Transverse colon (tissue), 4 donors: ENCODE measurements at regions of chr6 and their contacts with region 1.

Region 1: GRCh38 chr6:42745707-42746462 is at the start of gene TBCC:
- DNase-seq: peak; percentile 96
- H3K4me3 ChIP-seq: peak within 1 kb of the TSS; percentile 86 to 98 (median 91)
- H3K27ac ChIP-seq: peak within 1 kb of the TSS; percentile 95 to 99 (median 98)
- H3K4me1 ChIP-seq: peaks cover 16 to 27% (median 24%) of the 10 kb centered on the region in 4 donors
- H3K27me3 ChIP-seq: no peaks in the 10 kb centered on the region
- CTCF ChIP-seq: no peak
- EP300 ChIP-seq: no peak
- POLR2A ChIP-seq: peak; percentile 99
- total RNA-seq, gene TBCC: 5.2 to 43.3 (median 27.3) TPM

Region 2: DNA sequence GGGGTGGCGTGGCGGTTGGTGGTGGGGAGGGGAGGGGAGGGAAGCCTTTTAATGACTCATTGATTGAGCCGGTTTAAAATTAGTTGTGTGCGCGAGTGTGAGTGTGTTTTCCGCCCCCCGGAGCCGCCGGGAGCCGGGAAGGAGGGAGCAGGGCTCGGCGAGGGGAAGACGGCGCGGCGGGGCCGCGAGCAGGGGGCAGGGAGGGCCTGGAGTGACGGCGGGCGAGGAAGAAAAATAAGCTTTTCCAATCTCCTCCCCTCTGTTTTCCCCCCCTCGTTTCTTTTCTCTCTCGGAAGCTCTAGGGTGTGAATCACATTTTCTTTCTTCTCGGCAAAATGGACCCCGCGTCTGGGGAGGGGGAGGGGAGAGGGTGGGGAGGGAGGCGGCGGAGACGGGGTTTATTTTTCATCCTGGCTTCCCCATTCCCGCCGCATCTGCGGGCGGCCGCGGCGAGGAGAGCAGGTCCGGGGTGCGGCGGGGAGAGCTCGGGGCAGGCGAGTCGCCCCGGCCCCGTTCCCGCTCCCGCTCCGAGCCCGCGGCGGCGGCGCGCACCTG is 36.8 kb after region 1 on chr6:
- in situ Hi-C with region 1: no loop called
- intact Hi-C with region 1: loop called (anchors 2 kb)
- DNase-seq: peak; percentile 82
- H3K4me3 ChIP-seq: peak overlapping the region; percentile 69 to 98 (median 86)
- H3K27ac ChIP-seq: peak overlapping the region; percentile 98 to 100 (median 100)
- H3K4me1 ChIP-seq: peaks cover 12 to 66% (median 45%) of the 10 kb centered on the region in 4 donors
- H3K27me3 ChIP-seq: no peaks in the 10 kb centered on the region
- CTCF ChIP-seq: no peak
- EP300 ChIP-seq: no peak
- POLR2A ChIP-seq: peak; percentile 86

Region 3: DNA sequence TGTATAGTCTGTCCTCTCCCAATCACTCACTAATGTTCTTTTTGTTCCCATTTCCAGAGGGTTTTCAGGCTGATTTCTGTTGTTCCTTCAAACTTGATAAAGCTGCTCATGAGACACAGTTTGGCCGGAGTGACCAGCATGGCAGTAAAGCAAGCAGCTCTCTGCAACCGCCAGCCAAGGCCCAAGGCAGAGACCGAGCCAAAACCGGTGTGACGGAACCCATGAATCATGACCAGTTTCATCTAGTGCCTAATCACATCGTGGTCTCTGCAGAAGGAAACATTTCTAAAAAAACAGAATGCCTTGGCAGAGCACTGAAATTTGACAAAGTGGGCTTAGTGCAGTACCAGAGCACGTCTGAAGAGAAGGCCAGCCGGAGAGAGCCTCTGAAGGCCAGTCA is 118.7 kb after region 1 on chr6:
- in situ Hi-C with region 1: loop called in 1 of 4 experiments (anchors 25 kb)
- intact Hi-C with region 1: no loop called
- DNase-seq: no peak
- H3K4me3 ChIP-seq: no peak overlapping the region
- H3K27ac ChIP-seq: no peak overlapping the region
- H3K4me1 ChIP-seq: no peaks in the 10 kb centered on the region
- H3K27me3 ChIP-seq: no peaks in the 10 kb centered on the region
- CTCF ChIP-seq: no peak
- EP300 ChIP-seq: no peak
- POLR2A ChIP-seq: no peak

Region 4: GRCh38 chr6:42879372-42880239 is 133.7 kb after region 1 on chr6 and contains the start of gene RPL7L1:
- in situ Hi-C with region 1: loop called in 2 of 4 experiments (anchors 25 kb)
- intact Hi-C with region 1: loop called (anchors 5 kb)
- DNase-seq: peak; percentile 84
- H3K4me3 ChIP-seq: peak within 1 kb of the TSS; percentile 33 to 53 (median 48)
- H3K27ac ChIP-seq: peak within 1 kb of the TSS; percentile 86 to 95 (median 91)
- H3K4me1 ChIP-seq: peaks cover 7 to 26% (median 16%) of the 10 kb centered on the region in 4 donors
- H3K27me3 ChIP-seq: no peaks in the 10 kb centered on the region
- CTCF ChIP-seq: peak in 4 of 5 experiments; percentile 12 to 72 (median 45)
- EP300 ChIP-seq: no peak
- POLR2A ChIP-seq: peak; percentile 71
- total RNA-seq, gene RPL7L1: 27.3 to 57.1 (median 43.4) TPM

Region 5: DNA sequence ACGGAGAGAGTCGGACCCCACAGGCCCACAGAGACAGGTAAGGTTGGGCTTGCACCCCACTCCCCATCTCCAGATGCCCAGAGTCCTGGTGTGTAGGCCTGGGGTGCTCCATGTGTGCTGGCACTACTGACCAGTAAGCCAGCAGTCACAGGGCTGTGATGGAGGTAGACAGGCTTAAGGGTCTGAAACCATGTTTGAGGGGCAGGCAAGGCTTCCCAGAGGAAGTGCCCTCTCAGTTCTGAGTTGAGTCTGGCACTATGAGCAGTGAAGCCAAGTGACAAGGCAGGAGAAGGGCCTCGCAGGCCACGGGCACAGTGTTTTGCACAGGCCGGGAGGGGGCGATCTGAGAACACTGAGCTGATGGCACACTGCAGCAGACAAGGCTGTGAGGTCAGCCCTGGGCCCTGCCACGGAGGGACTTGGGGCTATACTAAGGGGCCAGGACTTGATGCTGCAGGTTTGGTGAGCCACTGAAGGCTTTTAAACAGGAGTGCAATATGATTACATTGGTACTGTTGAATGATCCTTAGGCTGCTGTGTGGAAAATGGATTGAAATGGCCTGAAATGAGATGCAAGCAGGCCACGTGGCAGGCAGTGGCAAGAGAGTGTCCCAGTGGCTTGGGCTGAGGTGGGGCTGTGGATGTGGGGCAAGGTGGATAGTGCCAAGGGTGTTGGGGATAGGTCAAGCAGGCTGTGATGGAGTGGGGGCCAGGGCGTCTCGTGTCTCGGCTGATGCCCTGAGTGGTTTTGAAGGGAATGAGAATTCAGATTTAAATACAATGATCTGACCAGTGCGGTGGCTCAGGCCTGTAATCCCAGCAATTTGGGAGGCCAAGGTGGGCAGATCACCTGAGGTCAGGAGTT is 517.7 kb after region 1 on chr6:
- in situ Hi-C with region 1: no loop called
- intact Hi-C with region 1: no loop called
- DNase-seq: peak; percentile 88
- H3K4me3 ChIP-seq: no peak overlapping the region
- H3K27ac ChIP-seq: no peak overlapping the region
- H3K4me1 ChIP-seq: peaks cover 10 to 16% (median 15%) of the 10 kb centered on the region in 4 donors
- H3K27me3 ChIP-seq: no peaks in the 10 kb centered on the region
- CTCF ChIP-seq: peak; percentile 73 to 89 (median 79)
- EP300 ChIP-seq: no peak
- POLR2A ChIP-seq: no peak